ENCODE measurements at regions of chr12 and their contacts with region 1.

Region 1: DNA sequence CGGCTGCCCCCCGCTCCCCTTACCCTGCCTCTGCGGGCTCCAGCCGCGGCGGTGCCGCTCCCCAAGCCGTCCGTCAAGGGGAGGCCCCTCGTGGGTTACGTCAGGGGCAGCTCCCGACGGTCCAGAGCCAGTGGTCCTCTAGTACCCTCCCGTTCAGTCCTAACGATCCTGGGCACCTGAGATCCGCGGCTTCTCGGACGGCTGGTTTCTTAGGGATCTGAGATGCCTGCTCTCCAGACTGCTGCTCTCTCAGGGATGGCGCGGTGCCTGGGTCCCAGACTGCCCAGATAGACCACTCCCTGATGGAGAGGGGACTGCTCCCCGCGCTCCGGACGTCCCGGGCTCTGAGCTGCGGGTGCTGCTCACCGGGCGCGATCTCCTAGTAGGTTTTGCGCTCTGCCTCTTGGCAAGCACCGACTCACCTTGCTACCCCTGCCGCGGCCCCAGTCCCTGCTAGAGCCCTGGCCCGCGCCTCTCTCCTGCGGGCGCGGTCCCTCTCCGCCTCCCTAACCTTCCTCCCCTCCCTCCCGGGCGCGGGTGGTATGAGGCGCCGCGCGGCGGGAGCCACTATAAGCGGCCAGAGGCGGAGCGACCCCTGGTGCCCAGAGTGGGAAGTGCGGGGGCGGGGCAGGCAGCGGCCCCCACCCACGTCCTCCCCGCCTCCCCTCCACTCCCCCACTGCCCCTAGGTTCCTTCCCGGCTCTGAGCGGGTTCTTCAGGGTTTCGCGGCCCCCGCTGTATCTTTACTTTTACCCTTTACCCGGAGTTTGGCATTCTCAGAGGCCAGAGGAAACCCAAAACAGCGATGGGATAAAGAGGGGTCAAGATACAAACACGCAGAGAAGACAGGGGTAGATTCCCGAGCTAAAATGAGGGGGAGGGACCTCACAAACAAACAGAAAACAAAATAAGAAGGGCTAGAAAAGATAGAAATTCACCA is at the start of gene C1QL4:
- DNase-seq: peak; percentile 88
- ATAC-seq: peak; percentile 81
- H3K4me3 Mint-ChIP-seq: peak within 1 kb of the TSS; percentile 53
- H3K27ac Mint-ChIP-seq: no peak within 1 kb of the TSS
- H3K4me1 Mint-ChIP-seq: peaks cover 19% of the 10 kb centered on the region
- H3K27me3 Mint-ChIP-seq: peaks cover 78% of the 10 kb centered on the region
- total RNA-seq, gene C1QL4: not detected

Region 2: DNA sequence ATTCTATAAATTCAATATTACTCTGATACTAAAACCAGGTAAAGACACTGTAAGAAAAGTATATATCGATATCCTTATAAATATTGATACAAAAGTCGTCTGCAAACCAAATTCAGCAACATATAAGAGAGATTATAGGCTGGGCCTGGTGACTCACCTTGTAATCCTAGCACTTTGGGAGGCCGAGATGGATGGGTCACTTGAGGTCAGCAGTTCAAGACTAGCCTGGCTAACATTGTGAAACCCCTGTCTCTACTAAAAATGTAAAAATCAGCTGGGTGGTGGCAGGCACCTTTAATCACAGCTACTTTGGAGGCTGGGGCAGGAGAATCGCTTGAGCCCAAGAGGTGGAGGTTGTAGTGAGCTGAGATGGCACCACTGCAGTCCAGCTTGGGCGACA is 85.6 kb before region 1 on chr12:
- CTCF ChIA-PET with region 1: no interaction called
- POLR2A ChIA-PET with region 1: no interaction called
- DNase-seq: no peak
- ATAC-seq: no peak
- H3K4me3 Mint-ChIP-seq: no peak overlapping the region
- H3K27ac Mint-ChIP-seq: no peak overlapping the region
- H3K4me1 Mint-ChIP-seq: no peaks in the 10 kb centered on the region
- H3K27me3 Mint-ChIP-seq: no peaks in the 10 kb centered on the region

Region 3: DNA sequence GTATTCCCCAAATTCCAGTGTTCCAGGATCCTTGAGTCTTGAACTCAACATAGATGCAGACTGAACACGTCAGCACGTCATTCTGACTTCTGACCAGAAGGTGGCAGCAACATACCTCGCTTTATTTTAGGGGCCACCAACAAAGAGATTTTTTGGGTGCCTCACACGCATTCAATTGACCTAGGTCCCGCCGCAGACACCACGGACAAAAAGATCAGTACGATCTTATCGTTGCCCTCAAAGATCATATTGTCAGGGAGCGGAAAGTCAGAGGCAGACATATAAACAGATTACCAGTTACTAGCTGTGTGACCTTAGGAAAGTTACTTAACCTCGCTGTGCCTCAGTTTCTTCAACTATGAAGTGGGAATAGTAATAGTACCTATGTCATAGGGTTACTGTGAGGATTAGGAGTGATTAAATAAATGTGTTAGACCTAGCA is 48.5 kb before region 1 on chr12:
- CTCF ChIA-PET with region 1: interaction called, 56 read pairs
- POLR2A ChIA-PET with region 1: no interaction called
- DNase-seq: peak; percentile 82
- ATAC-seq: peak; percentile 59
- H3K4me3 Mint-ChIP-seq: no peak overlapping the region
- H3K27ac Mint-ChIP-seq: no peak overlapping the region
- H3K4me1 Mint-ChIP-seq: peaks cover 5% of the 10 kb centered on the region
- H3K27me3 Mint-ChIP-seq: peaks cover 18% of the 10 kb centered on the region

Region 4: DNA sequence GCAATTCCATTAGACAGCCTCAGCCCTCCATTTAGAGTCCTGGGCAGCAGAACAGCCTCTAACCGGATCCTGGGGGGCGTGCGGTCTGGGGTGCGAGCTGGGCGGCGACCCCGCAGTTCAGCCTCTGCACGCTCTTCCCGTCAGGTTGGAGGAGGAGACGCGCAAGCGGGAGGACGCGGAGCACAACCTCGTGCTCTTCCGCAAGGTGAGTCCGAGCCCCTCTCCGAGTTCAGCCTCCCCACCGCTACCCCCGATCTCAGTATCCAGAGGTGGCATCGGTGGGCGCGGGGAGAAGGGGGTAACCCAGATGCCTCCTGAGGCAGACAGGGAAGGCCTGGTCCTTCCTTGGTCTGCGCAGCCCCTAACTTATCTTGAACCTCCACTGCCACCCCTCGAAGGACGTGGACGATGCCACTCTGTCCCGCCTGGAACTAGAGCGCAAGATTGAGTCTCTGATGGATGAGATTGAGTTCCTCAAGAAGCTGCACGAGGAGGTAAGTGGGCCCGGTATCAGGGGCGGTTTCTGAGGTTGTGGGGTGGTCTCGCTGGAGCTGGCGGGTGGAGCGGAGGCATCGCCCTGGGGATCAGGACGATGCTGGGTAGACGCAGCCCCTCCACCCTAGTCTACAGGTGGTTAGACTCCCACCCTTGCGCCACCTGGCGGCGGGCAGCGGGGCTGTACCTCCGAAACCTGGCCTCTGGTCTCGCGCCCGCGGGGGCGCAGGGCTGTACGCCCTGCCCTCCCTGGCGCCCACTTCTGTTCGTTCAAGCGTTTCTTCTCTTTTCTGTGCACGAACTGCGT is 40.7 kb before region 1 on chr12:
- CTCF ChIA-PET with region 1: interaction called, 56 read pairs
- POLR2A ChIA-PET with region 1: interaction called, 3 read pairs
- DNase-seq: peak; percentile 76
- ATAC-seq: peak; percentile 73
- H3K4me3 Mint-ChIP-seq: peak overlapping the region; percentile 63
- H3K27ac Mint-ChIP-seq: no peak overlapping the region
- H3K4me1 Mint-ChIP-seq: peaks cover 22% of the 10 kb centered on the region
- H3K27me3 Mint-ChIP-seq: peaks cover 51% of the 10 kb centered on the region